MCF 10A (cell line): ENCODE measurements at regions of chr9 and their contacts with region 1.

Region 1: GRCh38 chr9:83622939-83623678 is at the start of gene IDNK:
- DNase-seq: peak; percentile 65
- H3K4me3 Mint-ChIP-seq: peak within 1 kb of the TSS; percentile 83
- H3K27ac Mint-ChIP-seq: peak within 1 kb of the TSS; percentile 89
- H3K4me1 Mint-ChIP-seq: peaks cover 8% of the 10 kb centered on the region
- H3K27me3 Mint-ChIP-seq: no peaks in the 10 kb centered on the region
- CTCF ChIP-seq: no peak
- total RNA-seq, gene IDNK: 10.9 and 19.7 TPM in 2 replicates

Region 2: DNA sequence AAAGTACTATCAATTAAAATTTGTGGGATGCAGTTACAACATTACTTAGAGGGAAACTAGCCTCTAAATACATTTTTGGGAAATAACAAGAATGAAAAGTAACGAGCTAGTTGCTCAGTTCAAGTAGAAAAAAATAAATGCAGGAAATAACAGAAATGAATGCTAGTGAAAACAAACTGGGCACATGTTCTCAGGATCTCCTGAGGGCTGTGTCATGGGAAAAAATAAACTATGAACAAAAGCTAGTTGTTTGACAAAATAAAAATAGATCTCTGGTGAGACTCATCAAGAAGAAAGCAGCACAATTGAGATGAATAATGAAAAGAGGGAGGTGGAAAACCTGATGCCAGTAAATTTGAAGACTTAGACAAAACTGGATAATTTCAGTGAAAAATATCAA is 16.2 kb after region 1 on chr9:
- CTCF ChIA-PET with region 1: interaction called, 18 read pairs
- POLR2A ChIA-PET with region 1: interaction called, 5 read pairs
- intact Hi-C with region 1: no loop called
- DNase-seq: no peak
- H3K4me3 Mint-ChIP-seq: no peak overlapping the region
- H3K27ac Mint-ChIP-seq: no peak overlapping the region
- H3K4me1 Mint-ChIP-seq: no peaks in the 10 kb centered on the region
- H3K27me3 Mint-ChIP-seq: no peaks in the 10 kb centered on the region
- CTCF ChIP-seq: no peak

Region 3: GRCh38 chr9:83649080-83649479 is 26.0 kb after region 1 on chr9:
- CTCF ChIA-PET with region 1: interaction called, 13 read pairs
- POLR2A ChIA-PET with region 1: interaction called, 6 read pairs
- intact Hi-C with region 1: no loop called
- DNase-seq: peak; percentile 58
- H3K4me3 Mint-ChIP-seq: no peak overlapping the region
- H3K27ac Mint-ChIP-seq: no peak overlapping the region
- H3K4me1 Mint-ChIP-seq: no peaks in the 10 kb centered on the region
- H3K27me3 Mint-ChIP-seq: no peaks in the 10 kb centered on the region
- CTCF ChIP-seq: peak; percentile 62

Region 4: DNA sequence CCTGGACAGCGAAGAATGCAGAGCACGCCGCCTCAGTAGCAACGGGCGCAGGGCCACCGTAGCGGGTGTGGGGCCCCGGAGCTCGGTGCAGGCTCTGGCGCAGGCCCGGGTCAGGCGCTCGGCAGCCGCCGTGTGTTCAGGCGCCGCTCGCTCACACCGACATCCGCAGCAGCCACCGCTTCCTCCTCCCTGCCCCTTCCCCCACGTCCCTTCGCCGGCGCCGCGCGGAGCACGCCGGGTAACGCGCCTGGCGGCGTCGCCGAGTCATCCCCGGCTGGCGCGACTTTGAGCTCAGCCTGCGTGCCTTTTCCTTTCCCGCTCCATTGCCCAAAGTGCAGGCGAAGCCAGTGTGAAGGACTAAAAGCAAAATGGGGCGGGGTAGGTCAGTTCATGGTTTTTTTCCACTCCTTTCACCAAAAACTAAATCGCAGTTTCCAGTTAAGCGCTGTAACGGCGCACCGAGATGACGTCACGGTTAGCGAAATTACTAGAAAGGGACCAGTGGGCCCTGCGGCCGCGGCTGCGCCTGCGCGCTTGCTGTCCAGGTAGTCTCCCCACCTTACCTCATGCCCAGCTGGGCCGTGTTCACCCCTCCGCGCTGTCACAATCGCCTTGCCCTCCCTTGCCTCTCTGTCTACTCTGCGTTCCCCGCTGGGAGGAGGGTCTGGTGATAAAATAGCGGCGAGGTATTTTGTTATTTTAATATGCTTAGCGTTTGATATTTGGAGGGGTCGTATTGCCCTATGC is 84.8 kb after region 1 on chr9 and contains the start of gene UBQLN1:
- CTCF ChIA-PET with region 1: interaction called, 10 read pairs
- POLR2A ChIA-PET with region 1: interaction called, 22 read pairs
- intact Hi-C with region 1: loop called (anchors 5 kb)
- DNase-seq: peak; percentile 93
- H3K4me3 Mint-ChIP-seq: peak within 1 kb of the TSS; percentile 99
- H3K27ac Mint-ChIP-seq: peak within 1 kb of the TSS; percentile 99
- H3K4me1 Mint-ChIP-seq: peaks cover 17% of the 10 kb centered on the region
- H3K27me3 Mint-ChIP-seq: no peaks in the 10 kb centered on the region
- CTCF ChIP-seq: no peak
- total RNA-seq, gene UBQLN1: 146 and 169 TPM in 2 replicates